ENCODE measurements at regions of chr19 and their contacts with region 1.

Region 1: DNA sequence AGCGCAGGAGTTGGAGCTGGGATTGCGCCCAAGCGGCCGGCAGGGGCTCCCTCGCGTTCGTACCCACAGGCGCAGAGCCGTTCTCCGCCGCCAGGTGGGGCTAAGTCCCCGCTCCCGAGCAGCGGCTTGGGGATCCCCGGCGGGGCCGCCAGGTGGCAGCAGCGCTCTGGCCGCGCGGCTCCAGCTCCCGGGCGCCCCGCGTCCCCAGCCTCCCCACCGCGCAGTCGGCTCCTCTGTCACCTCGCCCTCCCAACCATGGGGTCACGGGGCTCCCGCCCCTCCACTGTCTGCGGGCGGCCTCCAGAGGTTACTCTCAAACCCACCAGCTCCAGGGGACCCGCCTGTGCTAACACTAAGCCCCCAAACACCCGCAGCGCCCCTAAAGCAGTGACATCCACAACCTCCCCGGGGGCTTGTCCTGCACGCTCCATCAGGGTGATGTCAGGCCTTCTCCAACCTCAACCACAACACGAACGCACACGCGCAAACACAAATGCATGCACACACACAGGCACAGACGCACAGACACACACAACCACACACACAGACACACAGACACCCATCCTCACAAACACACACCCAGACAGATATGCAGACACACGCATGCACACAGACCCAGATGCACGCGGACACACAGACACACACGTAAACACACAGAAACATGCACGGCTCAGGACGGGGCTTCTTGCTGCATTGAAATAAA is 18.4 kb upstream of the KCTD15 start:
- DNase-seq: peak; percentile 97
- CTCF ChIP-seq: peak; percentile 100

Region 2: GRCh38 chr19:33429891-33430673 is 348.2 kb before region 1 on chr19:
- in situ Hi-C with region 1: loop called (anchors 10 kb)
- DNase-seq: no peak
- CTCF ChIP-seq: peak; percentile 7

Region 3: GRCh38 chr19:34120846-34121639 is 342.8 kb after region 1 on chr19:
- in situ Hi-C with region 1: loop called (anchors 25 kb)
- DNase-seq: peak; percentile 62
- CTCF ChIP-seq: peak; percentile 67

Measured in GM13977 (cell line).